ENCODE measurements at regions of chr1 and their contacts with region 1.

Region 1: DNA sequence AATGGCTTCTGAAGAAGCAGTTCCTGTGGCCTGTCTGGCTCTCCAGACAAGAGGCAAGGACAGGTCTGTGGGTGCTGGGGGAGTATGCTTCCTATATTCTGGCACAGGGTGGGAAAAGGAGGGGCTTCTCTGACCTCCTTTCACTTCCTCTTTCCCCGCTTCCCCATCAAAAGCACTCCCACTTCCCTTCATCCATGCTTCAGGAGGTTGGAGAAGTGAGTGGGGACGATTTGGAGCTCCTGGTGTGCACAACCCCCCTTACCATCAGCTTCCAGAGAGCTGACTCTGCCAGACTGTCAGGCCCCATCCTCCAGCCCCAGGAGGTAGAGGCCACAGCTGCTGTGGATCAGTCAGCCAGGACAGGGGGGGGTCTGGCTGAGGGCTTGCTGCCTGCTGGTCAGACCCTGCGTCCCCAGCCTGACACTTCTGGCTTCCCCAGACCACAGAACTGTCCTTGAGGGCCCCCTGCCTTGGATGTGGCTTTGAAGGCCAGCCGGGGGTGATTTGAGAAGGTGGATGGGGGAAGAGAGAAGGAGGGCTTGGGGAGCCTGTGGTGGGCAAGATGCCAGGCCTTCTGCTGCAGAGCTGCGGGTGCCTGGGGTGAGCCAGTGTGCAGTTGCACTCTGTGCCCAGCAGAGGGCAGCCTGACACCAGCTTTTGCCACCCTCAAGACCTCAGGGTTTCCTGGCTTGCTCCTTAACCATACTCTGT is 21.5 kb upstream of the TMEM222 start:
- DNase-seq: peak in 1 of 2 experiments; percentile 90
- H3K4me3 ChIP-seq: no peak overlapping the region
- H3K27ac ChIP-seq: no peak overlapping the region
- H3K4me1 ChIP-seq: peaks cover 0 to 22% (median 11%) of the 10 kb centered on the region in 4 experiments; a peak in 6 of 7 replicates
- H3K27me3 ChIP-seq: no peaks in the 10 kb centered on the region
- CTCF ChIP-seq: peak; percentile 97 to 99 (median 99)
- EP300 ChIP-seq: no peak
- POLR2A ChIP-seq: no peak
- RAD21 ChIP-seq: peak; percentile 99 to 100

Region 2: GRCh38 chr1:27097484-27097917 is 203.0 kb before region 1 on chr1:
- CTCF ChIA-PET with region 1: interaction called, 131 read pairs
- POLR2A ChIA-PET with region 1: no interaction called
- DNase-seq: peak; percentile 38 to 93
- H3K4me3 ChIP-seq: no peak overlapping the region
- H3K27ac ChIP-seq: no peak overlapping the region
- H3K4me1 ChIP-seq: peaks cover 0 to 20% (median 13%) of the 10 kb centered on the region in 4 experiments; a peak in 6 of 7 replicates
- H3K27me3 ChIP-seq: no peaks in the 10 kb centered on the region
- CTCF ChIP-seq: peak in 2 of 3 experiments; percentile 96; a peak in 3 of 4 replicates
- EP300 ChIP-seq: no peak
- POLR2A ChIP-seq: no peak
- RAD21 ChIP-seq: peak; percentile 98 to 99

Region 3: DNA sequence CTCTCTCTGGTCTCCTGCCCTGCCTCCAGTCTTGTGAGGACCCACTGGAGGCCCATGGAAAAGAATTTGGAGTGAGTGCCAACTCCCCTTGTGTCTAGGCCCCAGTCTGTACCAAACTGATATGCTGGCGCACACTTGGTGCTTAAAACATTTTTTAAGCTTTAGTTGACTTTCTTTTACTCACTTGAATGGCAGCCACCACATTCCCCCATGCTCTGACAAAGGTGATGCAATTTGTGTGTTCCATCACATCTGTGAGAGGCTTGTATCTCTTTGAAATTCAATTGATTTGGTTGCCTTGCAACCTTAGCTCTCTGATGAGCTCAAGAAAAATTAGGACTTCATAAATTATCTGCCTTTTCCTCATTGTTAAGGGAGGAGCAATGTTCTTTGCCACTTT is 96.5 kb before region 1 on chr1:
- CTCF ChIA-PET with region 1: no interaction called
- POLR2A ChIA-PET with region 1: no interaction called
- DNase-seq: no peak
- H3K4me3 ChIP-seq: no peak overlapping the region
- H3K27ac ChIP-seq: no peak overlapping the region
- H3K4me1 ChIP-seq: no peaks in the 10 kb centered on the region
- H3K27me3 ChIP-seq: no peaks in the 10 kb centered on the region
- CTCF ChIP-seq: no peak
- EP300 ChIP-seq: no peak
- POLR2A ChIP-seq: no peak
- RAD21 ChIP-seq: no peak

Region 4: GRCh38 chr1:27246194-27246593 is 54.3 kb before region 1 on chr1:
- CTCF ChIA-PET with region 1: interaction called, 13 read pairs
- POLR2A ChIA-PET with region 1: no interaction called
- DNase-seq: no peak
- H3K4me3 ChIP-seq: no peak overlapping the region
- H3K27ac ChIP-seq: no peak overlapping the region
- H3K4me1 ChIP-seq: no peaks in the 10 kb centered on the region
- H3K27me3 ChIP-seq: no peaks in the 10 kb centered on the region
- CTCF ChIP-seq: no peak
- EP300 ChIP-seq: no peak
- POLR2A ChIP-seq: no peak
- RAD21 ChIP-seq: no peak

Region 5: DNA sequence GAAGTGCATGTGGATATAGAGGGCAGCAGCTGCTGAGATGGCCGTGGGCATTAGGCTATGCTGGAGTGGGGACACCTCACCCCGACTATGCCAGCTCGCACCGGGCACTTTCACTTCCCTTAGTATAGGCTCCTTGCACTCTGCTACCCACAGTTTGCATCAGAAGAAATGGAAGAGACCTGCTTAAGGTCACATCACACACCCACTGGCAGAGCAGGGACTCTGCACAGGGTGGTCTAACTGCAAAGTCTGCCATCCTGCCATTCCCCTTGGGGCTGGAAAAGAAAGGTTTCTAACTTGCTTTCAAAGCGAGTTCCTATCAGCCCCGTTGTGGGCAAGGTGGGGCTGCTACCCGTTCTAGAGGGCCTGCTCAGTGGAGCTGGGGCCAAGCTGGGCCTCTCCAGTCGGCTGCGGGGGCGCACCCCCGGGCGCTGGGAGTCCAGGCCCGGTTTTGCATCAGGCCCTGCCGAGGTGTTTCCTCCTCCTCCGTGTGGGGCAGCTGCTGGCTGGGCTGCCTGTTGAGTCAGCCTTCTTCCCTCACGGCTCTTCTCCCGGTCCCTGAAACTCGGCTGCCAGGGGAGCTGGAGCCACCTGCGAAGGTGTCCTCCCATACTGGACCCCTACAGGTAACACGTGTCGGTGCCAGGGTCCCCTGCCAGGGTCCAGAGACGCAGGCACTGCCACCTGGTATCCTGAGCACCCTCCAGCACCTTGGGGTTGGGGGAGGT is 41.2 kb after region 1 on chr1 and contains the start of gene SYTL1:
- CTCF ChIA-PET with region 1: interaction called, 321 read pairs
- POLR2A ChIA-PET with region 1: interaction called, 3 read pairs
- DNase-seq: peak in 1 of 2 experiments; percentile 73
- H3K4me3 ChIP-seq: peak within 1 kb of the TSS; percentile 16 to 64 (median 44)
- H3K27ac ChIP-seq: no peak within 1 kb of the TSS
- H3K4me1 ChIP-seq: peaks cover 0 to 25% (median 20%) of the 10 kb centered on the region in 4 experiments; a peak in 6 of 7 replicates
- H3K27me3 ChIP-seq: peaks cover 0 to 2% (median 0%) of the 10 kb centered on the region in 4 experiments; a peak in 1 of 7 replicates
- CTCF ChIP-seq: no peak
- EP300 ChIP-seq: no peak
- POLR2A ChIP-seq: no peak
- RAD21 ChIP-seq: no peak
- total RNA-seq, gene SYTL1: 6.4 and 8.8 TPM in 2 replicates

Region 6: DNA sequence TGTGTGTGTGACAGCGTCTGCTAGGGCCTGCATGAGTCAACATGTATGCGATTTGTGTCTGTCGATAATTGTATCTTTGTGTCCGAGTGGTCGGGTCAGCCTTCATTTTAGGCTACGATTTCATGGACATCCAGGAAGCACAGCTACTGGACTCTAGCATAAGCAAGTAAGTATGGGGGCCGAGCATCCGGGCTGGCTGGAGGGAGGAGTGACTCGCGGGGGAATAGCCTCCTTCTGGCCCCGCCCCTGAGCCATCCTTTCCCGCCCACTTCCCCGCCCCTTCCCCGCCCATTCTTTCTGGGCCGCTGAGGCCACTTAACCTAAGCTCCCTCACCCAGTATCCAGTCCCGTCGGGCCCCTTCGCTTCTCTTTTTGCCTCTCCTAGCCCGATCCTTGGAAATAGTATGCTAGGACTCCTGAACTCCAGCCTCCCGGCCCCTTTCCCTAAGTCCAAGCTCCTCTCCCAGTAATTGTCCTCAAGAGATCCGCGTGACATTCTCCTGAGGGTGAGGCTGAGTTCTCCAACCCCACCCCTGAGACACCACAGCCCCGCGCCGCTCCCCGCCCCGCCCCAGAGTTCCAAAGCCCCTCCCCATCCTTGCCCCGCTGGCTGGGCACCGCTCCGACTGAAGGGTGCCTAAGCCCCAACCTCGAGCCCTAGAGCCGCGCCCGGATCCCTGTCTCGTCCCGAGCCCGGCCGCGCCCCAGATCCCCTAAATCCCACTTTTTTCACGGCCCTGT is 65.0 kb after region 1 on chr1:
- CTCF ChIA-PET with region 1: interaction called, 195 read pairs
- POLR2A ChIA-PET with region 1: interaction called, 5 read pairs
- DNase-seq: peak in 1 of 2 experiments; percentile 86
- H3K4me3 ChIP-seq: peak overlapping the region; percentile 62 to 71 (median 64)
- H3K27ac ChIP-seq: no peak overlapping the region
- H3K4me1 ChIP-seq: peaks cover 6 to 20% (median 8%) of the 10 kb centered on the region in 4 experiments
- H3K27me3 ChIP-seq: peaks cover 5 to 15% (median 11%) of the 10 kb centered on the region in 4 experiments; a peak in 6 of 7 replicates
- CTCF ChIP-seq: no peak
- EP300 ChIP-seq: peak in 1 of 2 experiments; percentile 98; a peak in 1 of 3 replicates
- POLR2A ChIP-seq: peak in 1 of 2 experiments; percentile 51; a peak in 2 of 3 replicates
- RAD21 ChIP-seq: no peak

Region 7: DNA sequence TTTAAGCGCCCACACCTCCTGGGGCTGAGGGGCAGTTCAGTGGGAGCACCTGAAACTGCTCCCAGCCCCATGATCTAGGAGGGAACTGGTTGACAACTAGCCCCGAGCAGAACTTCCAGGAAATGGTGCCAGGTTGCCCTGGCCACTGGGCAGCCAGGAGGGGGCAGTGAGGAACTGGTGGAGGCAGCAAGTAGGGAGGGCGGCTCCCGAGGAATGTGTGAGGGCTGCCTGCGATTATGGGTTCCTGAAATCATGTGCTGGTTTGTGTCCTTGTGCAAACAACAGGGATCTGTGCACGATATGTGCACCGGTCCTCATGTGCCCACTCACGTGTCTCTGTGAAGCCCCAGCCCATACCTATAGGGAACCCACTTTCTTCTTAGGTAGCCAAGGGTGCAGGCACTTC is 101.9 kb after region 1 on chr1:
- CTCF ChIA-PET with region 1: interaction called, 167 read pairs
- POLR2A ChIA-PET with region 1: interaction called, 5 read pairs
- DNase-seq: peak in 1 of 2 experiments; percentile 76
- H3K4me3 ChIP-seq: no peak overlapping the region
- H3K27ac ChIP-seq: peak overlapping the region; percentile 1; the same call in 1 of the 2 replicates
- H3K4me1 ChIP-seq: peaks cover 13 to 48% (median 22%) of the 10 kb centered on the region in 4 experiments
- H3K27me3 ChIP-seq: no peaks in the 10 kb centered on the region
- CTCF ChIP-seq: peak; percentile 63 to 85 (median 84)
- EP300 ChIP-seq: no peak
- POLR2A ChIP-seq: 0 out of 3 replicates have a peak, but pooled peaks of 1 of the 2 experiments have one; percentile 46
- RAD21 ChIP-seq: peak; percentile 62 to 69